Activated CD4-positive, alpha-beta memory T cell treated with anti-CD3 and anti-CD28 coated beads, Interleukin-2, amount 10 ng/mL, durations not matched to agents 7 days and 5 days (primary cell): ENCODE measurements at regions of chr5 and their contacts with region 1.

Region 1: GRCh38 chr5:79612667-79613198 is 492 bp downstream of the TENT2 start:
- DNase-seq: no peak
- H3K4me3 Mint-ChIP-seq: peak overlapping the region; percentile 92
- H3K27ac Mint-ChIP-seq: peak overlapping the region; percentile 91
- H3K4me1 Mint-ChIP-seq: peaks cover 36% of the 10 kb centered on the region
- H3K27me3 Mint-ChIP-seq: peaks cover 2% of the 10 kb centered on the region

Region 2: DNA sequence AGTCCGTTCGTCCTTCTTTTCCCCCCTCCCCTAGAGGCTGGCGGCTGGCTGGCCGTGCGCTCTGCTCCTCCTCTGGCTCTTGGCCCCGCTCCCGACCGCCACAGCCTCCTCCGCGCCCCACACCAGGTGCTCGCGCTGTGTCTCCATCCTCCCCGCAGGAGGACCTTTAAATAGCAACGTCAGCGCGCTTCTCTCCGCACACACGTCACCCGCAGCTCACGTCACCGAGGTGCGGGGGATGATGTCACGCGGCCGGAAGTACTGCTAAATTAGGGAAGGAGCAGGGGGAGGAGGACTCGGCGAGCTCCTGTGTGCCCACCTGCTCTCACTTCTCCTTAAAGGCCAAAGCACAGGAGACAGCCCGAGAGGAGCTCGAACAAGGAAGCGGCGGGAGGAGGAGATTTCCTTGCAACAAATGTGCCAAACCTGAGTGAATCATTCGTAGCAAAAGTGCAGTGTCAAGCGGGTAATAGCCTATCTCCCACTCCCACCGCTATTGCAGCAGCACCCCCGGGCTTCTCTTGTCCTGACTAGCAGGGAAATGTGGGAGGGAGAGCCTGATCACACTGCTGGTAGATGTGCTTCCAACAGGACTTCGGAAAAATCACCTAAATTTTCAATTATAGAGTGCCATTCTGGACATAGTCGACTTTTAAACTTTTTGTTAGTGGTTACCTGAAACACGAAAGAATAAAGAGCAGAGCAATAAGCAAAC is 98.2 kb before region 1 on chr5:
- CTCF ChIA-PET with region 1: no interaction called
- POLR2A ChIA-PET with region 1: interaction called, 10 read pairs
- DNase-seq: peak; percentile 91
- H3K4me3 Mint-ChIP-seq: peak overlapping the region; percentile 98
- H3K27ac Mint-ChIP-seq: peak overlapping the region; percentile 86
- H3K4me1 Mint-ChIP-seq: peaks cover 23% of the 10 kb centered on the region
- H3K27me3 Mint-ChIP-seq: peaks cover 33% of the 10 kb centered on the region

Region 3: DNA sequence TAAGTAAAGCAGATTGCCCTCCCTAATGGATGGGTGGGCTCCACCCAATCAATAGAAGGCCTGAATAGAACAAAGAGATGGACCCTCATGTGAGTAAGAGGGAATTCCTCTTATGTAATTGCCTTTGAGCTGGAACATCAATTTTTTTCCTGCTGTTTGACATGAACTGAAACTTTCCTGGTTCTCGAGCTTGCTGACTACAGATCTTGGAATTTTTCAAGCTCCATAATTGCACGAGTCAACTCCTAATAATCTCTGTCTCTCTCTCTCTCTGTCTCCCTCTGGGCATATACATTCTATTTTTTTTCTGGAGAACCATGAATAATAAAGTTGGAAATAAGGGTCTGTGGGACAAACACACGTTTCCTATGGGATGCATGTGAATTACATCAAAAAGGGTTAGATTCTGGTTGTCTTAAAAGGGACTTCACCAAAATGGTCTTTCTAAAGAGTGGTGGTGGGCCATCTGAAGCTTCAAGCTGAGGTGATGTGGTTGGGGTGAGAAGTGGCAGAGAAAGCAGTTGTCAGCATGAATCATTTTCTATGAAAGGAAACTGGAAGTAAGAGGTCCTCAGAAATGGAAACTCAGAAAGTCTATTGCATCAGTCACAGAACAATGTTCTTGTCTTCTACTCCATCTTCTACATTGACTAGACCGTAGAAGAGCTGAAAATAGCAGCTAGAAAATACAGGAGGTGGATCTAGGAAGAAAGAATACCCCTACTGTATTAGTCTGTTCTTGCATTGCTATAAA is 51.8 kb before region 1 on chr5:
- CTCF ChIA-PET with region 1: interaction called, 4 read pairs
- POLR2A ChIA-PET with region 1: interaction called, 11 read pairs
- DNase-seq: peak; percentile 40
- H3K4me3 Mint-ChIP-seq: no peak overlapping the region
- H3K27ac Mint-ChIP-seq: peak overlapping the region; percentile 86
- H3K4me1 Mint-ChIP-seq: peaks cover 40% of the 10 kb centered on the region
- H3K27me3 Mint-ChIP-seq: no peaks in the 10 kb centered on the region